A549 (cell line): ENCODE measurements at regions of chr10 and their contacts with region 1.

Region 1: GRCh38 chr10:71396084-71396720 is 518 bp upstream of the CDH23 start:
- DNase-seq: peak; percentile 75 to 76
- ATAC-seq: peak; percentile 86 to 94
- H3K4me3 ChIP-seq: peak overlapping the region; percentile 58
- H3K27ac ChIP-seq: peak overlapping the region; percentile 71 to 91
- H3K4me1 ChIP-seq: peaks cover 7% of the 10 kb centered on the region; the same call in 1 of the 3 replicates
- CTCF ChIP-seq: peak; percentile 77
- EP300 ChIP-seq: no peak
- POLR2A ChIP-seq: no peak
- RAD21 ChIP-seq: peak; percentile 80 to 92

Region 2: DNA sequence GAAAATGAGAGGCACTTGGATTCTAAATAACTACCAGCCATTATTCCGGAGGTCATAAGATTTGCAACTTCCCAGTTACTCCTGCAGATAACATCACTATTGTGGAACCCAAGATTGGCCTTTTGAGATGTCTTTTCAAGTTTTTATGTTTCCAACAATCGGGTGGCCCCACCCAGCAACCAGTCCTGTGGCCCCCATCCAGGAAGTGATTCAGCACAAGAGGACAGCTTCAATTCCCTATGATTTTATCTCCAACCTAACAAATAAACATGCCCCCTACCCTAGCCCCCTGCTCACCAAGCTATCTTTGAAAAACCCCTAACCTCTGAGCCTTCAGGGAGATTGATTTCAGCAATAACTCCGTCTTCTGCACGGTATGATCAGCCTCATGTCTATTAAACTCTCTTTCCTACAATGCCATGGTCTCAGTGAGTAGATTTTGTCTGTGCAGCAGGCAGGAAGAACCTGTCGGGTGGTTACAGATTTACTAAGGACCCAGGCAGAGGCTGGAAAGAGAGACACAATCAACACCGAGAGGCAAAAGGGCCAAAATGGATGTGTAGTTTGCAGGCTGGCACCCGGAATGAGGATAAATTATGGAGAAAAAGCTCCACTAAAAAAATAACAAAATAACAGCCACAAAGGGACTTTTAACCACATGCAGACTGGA is 267.8 kb before region 1 on chr10:
- CTCF ChIA-PET with region 1: no interaction called
- POLR2A ChIA-PET with region 1: no interaction called
- DNase-seq: no peak
- ATAC-seq: no peak
- H3K4me3 ChIP-seq: no peak overlapping the region
- H3K27ac ChIP-seq: no peak overlapping the region
- H3K4me1 ChIP-seq: no peaks in the 10 kb centered on the region
- CTCF ChIP-seq: no peak
- EP300 ChIP-seq: no peak
- POLR2A ChIP-seq: no peak
- RAD21 ChIP-seq: no peak

Region 3: DNA sequence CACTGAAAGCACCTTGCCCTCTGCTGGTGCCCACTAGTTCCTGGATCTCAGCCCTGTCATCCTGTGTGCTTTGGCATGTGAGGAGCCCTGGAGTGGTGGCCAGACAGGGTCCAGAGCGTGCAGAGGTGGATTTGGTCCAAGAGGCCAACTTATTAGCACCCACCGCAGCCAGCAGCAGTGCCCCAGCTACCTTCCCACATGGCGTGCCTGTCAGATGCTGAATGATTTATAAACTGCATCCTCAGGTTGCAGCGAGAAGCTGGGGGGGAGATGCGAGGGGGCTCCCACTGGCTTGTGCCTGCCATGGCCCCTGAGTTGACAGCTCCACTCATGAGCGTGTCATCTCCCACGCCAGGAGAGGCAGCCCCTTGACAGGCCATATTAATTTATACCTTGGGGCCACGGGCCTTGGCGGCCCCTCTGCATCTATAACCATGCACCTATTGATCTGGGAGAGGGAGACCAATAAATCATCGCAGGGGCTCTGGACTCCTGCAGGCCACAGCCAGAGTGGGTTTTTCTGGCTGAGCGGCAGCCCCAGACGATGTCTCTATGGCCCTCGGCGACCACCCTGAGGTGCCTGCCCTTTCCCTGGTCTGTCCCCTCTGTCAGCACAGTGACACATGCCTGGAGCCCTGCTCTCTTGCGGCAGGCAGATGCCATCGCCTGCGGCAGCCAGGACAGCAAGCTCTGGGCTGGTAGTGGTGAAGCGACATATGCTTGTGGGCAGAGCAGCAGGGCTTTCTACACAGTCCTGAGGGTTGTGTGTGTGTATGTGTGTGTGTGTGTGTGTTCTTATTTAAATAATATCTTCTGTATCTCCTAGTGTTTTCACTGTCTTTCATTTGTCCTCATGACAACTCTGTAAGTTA is 121.3 kb after region 1 on chr10:
- CTCF ChIA-PET with region 1: interaction called, 10 read pairs
- POLR2A ChIA-PET with region 1: no interaction called
- DNase-seq: no peak
- ATAC-seq: no peak; a peak in 1 of 6 replicates
- H3K4me3 ChIP-seq: no peak overlapping the region
- H3K27ac ChIP-seq: no peak overlapping the region
- H3K4me1 ChIP-seq: no peaks in the 10 kb centered on the region
- CTCF ChIP-seq: no peak
- EP300 ChIP-seq: no peak
- POLR2A ChIP-seq: no peak
- RAD21 ChIP-seq: no peak

Region 4: DNA sequence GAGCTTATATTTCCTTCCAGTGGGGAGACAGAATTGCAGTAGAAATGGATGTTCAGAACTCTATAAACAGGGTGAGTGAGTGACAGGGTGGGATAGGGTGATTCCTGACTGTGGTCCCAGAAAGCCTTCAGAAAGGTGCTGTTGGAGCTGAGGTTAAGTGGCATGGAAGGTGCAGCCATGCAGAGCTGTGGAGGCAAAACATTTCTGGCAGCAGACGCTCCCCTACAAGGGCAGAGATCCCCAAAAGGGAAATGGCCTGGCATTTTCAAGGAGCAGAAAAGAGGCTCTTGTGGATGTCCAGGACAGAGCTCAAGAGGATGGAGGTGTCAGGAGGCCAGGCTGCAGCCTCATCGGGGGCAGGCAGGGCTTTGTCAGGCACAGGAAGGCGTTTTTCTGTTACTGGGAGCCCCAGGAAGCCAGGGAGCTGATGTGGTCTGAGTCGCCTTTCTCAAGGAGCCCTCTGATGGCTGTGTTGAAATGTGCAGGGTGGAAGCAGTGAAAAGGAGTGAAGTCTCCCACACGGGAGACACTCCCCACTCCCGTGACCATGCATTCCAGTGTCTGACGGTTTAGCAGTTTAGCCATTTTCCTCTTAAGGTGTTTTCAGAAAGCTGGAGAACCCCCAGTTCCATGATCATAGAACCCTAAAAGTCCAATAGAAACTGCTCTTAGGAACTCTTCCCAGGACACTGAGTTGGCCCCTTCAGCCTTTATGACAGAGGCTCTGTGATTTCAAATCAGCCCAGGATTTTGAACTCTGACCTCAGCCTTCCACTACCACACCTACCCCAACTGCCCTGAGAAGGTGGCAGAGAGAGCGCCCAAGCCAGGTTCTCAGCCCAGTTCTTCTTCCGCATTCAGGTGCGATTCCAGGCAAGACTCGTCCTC is 227.1 kb after region 1 on chr10:
- CTCF ChIA-PET with region 1: interaction called, 10 read pairs
- POLR2A ChIA-PET with region 1: no interaction called
- DNase-seq: peak; percentile 30 to 68
- ATAC-seq: peak; percentile 81 to 87
- H3K4me3 ChIP-seq: no peak overlapping the region
- H3K27ac ChIP-seq: peak overlapping the region in 1 of 2 experiments; percentile 52; a peak in 2 of 6 replicates
- H3K4me1 ChIP-seq: peaks cover 9% of the 10 kb centered on the region
- CTCF ChIP-seq: 0 out of 3 replicates have a peak, but pooled peaks have one; percentile 12
- EP300 ChIP-seq: no peak
- POLR2A ChIP-seq: no peak
- RAD21 ChIP-seq: peak in 1 of 2 experiments; percentile 32; a peak in 1 of 5 replicates